Posterior vena cava (tissue), 2 donors: ENCODE measurements at regions of chr1 and their contacts with region 1.

Region 1: DNA sequence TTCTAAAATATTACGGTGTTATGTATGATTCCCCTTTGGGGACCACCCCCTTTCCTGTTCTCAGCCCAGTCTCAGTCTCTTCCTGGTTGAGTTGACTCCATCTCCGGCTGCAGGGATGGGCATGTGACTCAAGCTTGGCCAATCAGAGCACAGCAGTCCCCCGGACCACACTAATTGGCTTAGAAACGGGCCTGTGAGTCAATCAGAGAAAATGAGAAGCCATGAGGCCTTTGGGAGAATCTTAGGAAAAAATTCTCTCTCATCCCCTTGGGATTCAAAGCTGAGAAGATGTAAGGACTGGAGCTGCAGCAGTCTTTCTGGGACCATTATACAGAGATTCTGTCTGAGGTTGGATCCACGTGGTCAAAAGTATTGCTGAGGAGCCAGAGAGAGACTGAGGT is 10.7 kb upstream of the FHAD1 start:
- DNase-seq: no peak

Region 2: GRCh38 chr1:15220825-15221431 is 15.4 kb before region 1 on chr1:
- intact Hi-C with region 1: loop called in 1 of 2 experiments (anchors 1 kb)
- DNase-seq: peak; percentile 40